ENCODE measurements at regions of chr6 and their contacts with region 1.

Region 1: GRCh38 chr6:37819885-37820717 is 574 bp downstream of the ZFAND3 start:
- DNase-seq: peak in 5 of 10 donors; percentile 12 to 81 (median 32)

Region 2: DNA sequence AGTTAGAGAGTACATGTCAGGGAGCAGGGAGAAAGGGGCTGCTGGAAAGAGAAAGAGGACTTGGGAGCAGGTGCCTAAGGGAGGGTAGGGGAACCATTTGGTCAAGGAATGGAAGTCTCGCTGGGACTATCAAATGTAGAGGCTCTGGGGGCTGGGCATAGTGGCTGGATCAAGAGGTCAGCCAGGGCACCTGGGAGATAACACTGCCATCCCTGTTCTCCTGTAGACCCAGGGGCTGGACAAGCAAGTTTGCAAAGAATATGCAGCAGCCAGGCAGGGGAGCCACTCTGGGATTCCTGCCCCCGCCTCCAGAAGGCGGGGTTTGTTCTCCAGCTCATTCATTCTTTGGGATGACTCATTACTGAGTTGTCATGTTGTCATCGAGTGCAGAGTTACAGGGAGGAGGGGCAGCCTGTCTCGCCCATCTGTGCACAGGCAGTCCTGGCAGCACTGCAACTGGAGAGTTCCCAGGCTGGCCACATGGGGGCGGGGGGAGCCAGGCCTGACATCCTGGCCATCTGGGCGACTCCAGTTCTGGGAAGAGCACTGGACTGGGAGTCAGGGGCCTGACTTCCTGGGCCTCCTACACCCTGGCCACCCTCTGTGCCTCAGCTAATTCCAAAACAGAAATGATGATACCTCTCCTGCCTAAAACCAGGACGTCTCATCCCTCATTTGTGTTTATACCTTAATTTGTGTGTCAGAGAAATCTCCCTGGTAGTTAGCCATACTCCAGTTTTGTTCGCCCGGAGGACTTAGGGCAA is 28.8 kb before region 1 on chr6:
- intact Hi-C with region 1: loop called (anchors 1 kb)
- DNase-seq: peak; percentile 89 to 99 (median 92)

Region 3: DNA sequence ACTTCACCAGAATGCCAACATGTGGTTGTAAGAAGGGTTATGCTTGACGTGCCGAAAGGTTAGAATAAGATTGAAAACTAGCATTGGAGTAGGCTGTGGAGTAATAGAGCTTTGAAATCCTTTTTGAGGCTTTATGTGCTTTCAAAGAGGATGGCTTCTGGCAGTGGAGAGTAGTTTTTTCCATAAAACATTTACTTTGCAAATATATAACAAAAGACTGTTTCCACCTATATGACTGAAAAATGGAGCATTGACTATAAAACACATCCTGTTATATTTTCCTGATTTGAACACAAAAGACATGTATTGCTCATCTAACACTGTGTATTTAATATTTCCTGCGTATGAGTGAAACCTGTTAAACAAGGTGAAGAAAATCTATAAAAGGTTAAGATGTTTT is 38.3 kb after region 1 on chr6:
- intact Hi-C with region 1: loop called (anchors 5 kb)
- DNase-seq: no peak